Activated CD4-positive, alpha-beta memory T cell treated with anti-CD3 and anti-CD28 coated beads, Interleukin-2, amount 10 ng/mL, durations not matched to agents 7 days and 5 days (primary cell): ENCODE measurements at regions of chr12 and their contacts with region 1.

Region 1: GRCh38 chr12:75505706-75506312 is 5.6 kb downstream of the KRR1 start:
- DNase-seq: no peak
- H3K4me3 Mint-ChIP-seq: no peak overlapping the region
- H3K27ac Mint-ChIP-seq: no peak overlapping the region
- H3K4me1 Mint-ChIP-seq: peaks cover 28% of the 10 kb centered on the region
- H3K27me3 Mint-ChIP-seq: no peaks in the 10 kb centered on the region

Region 2: GRCh38 chr12:75334384-75335030 is 171.3 kb before region 1 on chr12 and contains the start of gene GLIPR1L1:
- CTCF ChIA-PET with region 1: interaction called, 13 read pairs
- POLR2A ChIA-PET with region 1: interaction called, 5 read pairs
- DNase-seq: peak; percentile 83
- H3K4me3 Mint-ChIP-seq: peak within 1 kb of the TSS; percentile 59
- H3K27ac Mint-ChIP-seq: no peak within 1 kb of the TSS
- H3K4me1 Mint-ChIP-seq: peaks cover 33% of the 10 kb centered on the region
- H3K27me3 Mint-ChIP-seq: peaks cover 31% of the 10 kb centered on the region
- total RNA-seq, gene GLIPR1L1: not detected

Region 3: GRCh38 chr12:75390899-75391538 is 114.8 kb before region 1 on chr12 and contains the start of gene GLIPR1L2:
- CTCF ChIA-PET with region 1: interaction called, 10 read pairs
- POLR2A ChIA-PET with region 1: interaction called, 3 read pairs
- DNase-seq: peak; percentile 92
- H3K4me3 Mint-ChIP-seq: peak within 1 kb of the TSS; percentile 75
- H3K27ac Mint-ChIP-seq: peak within 1 kb of the TSS; percentile 83
- H3K4me1 Mint-ChIP-seq: peaks cover 39% of the 10 kb centered on the region
- H3K27me3 Mint-ChIP-seq: no peaks in the 10 kb centered on the region
- total RNA-seq, gene GLIPR1L2: 0.35 TPM in 1 of 2 experiments, not detected in the other

Region 4: GRCh38 chr12:75437564-75437963 is 68.2 kb before region 1 on chr12:
- CTCF ChIA-PET with region 1: interaction called, 11 read pairs
- POLR2A ChIA-PET with region 1: interaction called, 3 read pairs
- DNase-seq: no peak
- H3K4me3 Mint-ChIP-seq: no peak overlapping the region
- H3K27ac Mint-ChIP-seq: no peak overlapping the region
- H3K4me1 Mint-ChIP-seq: peaks cover 15% of the 10 kb centered on the region
- H3K27me3 Mint-ChIP-seq: no peaks in the 10 kb centered on the region

Region 5: GRCh38 chr12:75489613-75490210 is 16.1 kb before region 1 on chr12:
- CTCF ChIA-PET with region 1: interaction called, 65 read pairs
- POLR2A ChIA-PET with region 1: interaction called, 13 read pairs
- DNase-seq: no peak
- H3K4me3 Mint-ChIP-seq: no peak overlapping the region
- H3K27ac Mint-ChIP-seq: peak overlapping the region; percentile 29
- H3K4me1 Mint-ChIP-seq: peaks cover 35% of the 10 kb centered on the region
- H3K27me3 Mint-ChIP-seq: no peaks in the 10 kb centered on the region

Region 6: DNA sequence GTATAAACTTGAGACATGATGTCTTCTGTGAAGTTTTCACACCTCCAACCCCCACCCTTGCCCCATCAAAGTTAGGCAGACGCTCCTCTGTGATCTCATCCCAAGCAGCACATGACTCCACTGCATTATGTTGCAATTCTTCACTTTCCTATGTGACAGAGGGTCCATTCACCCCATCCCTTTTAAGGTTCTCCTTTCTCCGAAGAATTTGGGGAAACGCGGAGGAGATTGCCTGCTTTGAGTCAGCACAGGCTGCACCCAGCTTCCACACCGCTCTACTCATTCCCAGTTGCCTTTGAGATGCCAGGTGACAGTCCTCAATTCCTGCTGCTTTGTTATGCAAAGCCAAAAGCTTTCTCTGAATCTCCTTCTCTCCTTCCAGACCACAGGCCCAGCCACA is 464.0 kb after region 1 on chr12:
- CTCF ChIA-PET with region 1: no interaction called
- POLR2A ChIA-PET with region 1: no interaction called
- DNase-seq: no peak
- H3K4me3 Mint-ChIP-seq: no peak overlapping the region
- H3K27ac Mint-ChIP-seq: no peak overlapping the region
- H3K4me1 Mint-ChIP-seq: peaks cover 23% of the 10 kb centered on the region
- H3K27me3 Mint-ChIP-seq: no peaks in the 10 kb centered on the region